CD8-positive, alpha-beta T cell (primary cell): ENCODE measurements at regions of chr2 and their contacts with region 1.

Region 1: GRCh38 chr2:189592353-189592984 is 11.9 kb upstream of the SLC40A1 start:
- DNase-seq: no peak
- ATAC-seq: no peak
- H3K4me3 ChIP-seq: no peak overlapping the region
- H3K4me3 Mint-ChIP-seq: no peak overlapping the region
- H3K27ac ChIP-seq: no peak overlapping the region
- H3K27ac Mint-ChIP-seq: peak overlapping the region; percentile 30
- H3K4me1 ChIP-seq: peaks cover 18% of the 10 kb centered on the region
- H3K4me1 Mint-ChIP-seq: peaks cover 26% of the 10 kb centered on the region
- H3K27me3 ChIP-seq: no peaks in the 10 kb centered on the region
- H3K27me3 Mint-ChIP-seq: peaks cover 4% of the 10 kb centered on the region
- CTCF ChIP-seq: no peak

Region 2: DNA sequence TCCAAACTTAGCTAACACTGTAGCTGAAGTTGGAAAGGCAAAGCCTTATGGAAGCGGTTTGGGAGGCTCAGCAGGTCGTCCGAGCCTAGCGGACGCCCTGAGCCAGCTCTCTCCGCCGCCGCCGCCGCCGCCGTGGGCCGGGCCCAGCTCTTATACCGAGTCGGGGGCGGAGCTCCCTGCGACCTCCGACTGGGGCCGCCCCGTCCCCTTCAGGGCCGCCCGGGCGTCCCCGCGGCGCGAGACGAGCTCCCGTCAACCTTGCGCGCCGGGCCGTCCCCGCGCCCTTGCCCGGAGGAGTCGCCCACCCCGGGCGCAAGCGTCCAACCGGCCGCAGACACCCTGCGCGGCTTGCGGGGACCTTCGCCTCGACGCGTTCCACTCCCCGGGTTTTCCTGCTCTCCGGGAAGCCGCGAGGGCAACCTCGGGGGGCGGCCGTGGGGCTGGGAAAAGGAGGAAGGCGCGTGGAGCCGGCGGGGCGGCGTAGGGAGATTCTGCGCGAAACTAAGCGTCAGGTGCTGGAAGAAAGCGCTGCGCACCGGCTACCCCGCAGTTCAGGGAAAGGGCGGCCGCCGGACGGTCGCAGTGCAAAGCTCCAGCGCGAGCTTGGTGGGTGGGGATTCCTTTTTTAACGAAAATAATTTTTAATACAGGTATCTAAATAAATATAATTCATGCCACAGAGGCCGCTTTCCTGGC is 11.7 kb before region 1 on chr2 and contains the start of gene SLC40A1:
- CTCF ChIA-PET with region 1: no interaction called
- POLR2A ChIA-PET with region 1: interaction called, 13 read pairs
- intact Hi-C with region 1: no loop called
- DNase-seq: peak in 8 of 9 experiments; percentile 36 to 78 (median 59)
- ATAC-seq: peak; percentile 95
- H3K4me3 ChIP-seq: peak within 1 kb of the TSS; percentile 55 to 63
- H3K4me3 Mint-ChIP-seq: peak within 1 kb of the TSS; percentile 91
- H3K27ac ChIP-seq: peak within 1 kb of the TSS; percentile 29
- H3K27ac Mint-ChIP-seq: peak within 1 kb of the TSS; percentile 81
- H3K4me1 ChIP-seq: peaks cover 17% of the 10 kb centered on the region
- H3K4me1 Mint-ChIP-seq: peaks cover 38% of the 10 kb centered on the region
- H3K27me3 ChIP-seq: peaks cover 0 to 2% of the 10 kb centered on the region in 2 experiments
- H3K27me3 Mint-ChIP-seq: peaks cover 17% of the 10 kb centered on the region
- CTCF ChIP-seq: no peak
- total RNA-seq, gene SLC40A1: 1.3 to 1.9 TPM